Calu3 (cell line): ENCODE measurements at regions of chr13 and their contacts with region 1.

Region 1: GRCh38 chr13:71524613-71525304 is 342.2 kb downstream of the DACH1 start:
- DNase-seq: no peak
- H3K4me3 Mint-ChIP-seq: no peak overlapping the region
- H3K27ac Mint-ChIP-seq: no peak overlapping the region
- H3K4me1 Mint-ChIP-seq: no peaks in the 10 kb centered on the region
- H3K27me3 Mint-ChIP-seq: no peaks in the 10 kb centered on the region
- CTCF ChIP-seq: no peak

Region 2: DNA sequence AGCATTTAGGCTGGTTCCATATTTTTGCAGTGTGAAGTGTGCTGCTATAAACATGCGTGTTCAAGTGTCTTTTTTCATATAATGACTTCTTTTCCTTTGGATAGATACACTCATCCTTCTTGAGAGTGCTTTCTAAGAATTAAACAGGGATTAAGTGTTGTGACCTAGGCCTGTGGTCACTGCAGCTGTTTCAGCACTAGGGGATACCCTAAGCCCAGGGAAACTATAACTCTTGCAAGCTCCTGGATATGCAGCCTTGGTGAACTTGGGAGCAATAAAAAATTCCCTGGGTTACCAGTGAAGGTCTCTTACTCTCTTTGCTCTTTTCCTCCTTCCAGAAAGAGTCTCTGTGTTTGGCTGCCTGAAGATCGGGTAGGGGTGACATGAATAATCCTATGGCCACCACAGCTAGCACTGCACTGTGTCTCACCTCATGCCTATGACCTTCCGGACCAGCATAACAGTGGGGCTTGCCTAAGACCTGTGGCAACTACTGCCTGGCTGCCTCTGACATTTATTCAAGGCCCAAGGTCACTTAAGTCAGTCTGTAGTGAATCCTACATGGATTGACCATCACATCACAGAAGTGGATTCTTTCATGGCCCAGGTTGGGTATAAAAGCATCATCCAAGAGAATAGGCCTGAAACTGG is 457.5 kb before region 1 on chr13:
- CTCF ChIA-PET with region 1: no interaction called
- intact Hi-C with region 1: loop called (anchors 5 kb)
- DNase-seq: no peak
- H3K4me3 Mint-ChIP-seq: no peak overlapping the region
- H3K27ac Mint-ChIP-seq: no peak overlapping the region
- H3K4me1 Mint-ChIP-seq: no peaks in the 10 kb centered on the region
- H3K27me3 Mint-ChIP-seq: no peaks in the 10 kb centered on the region
- CTCF ChIP-seq: no peak